CD4-positive, alpha-beta memory T cell (primary cell): ENCODE measurements at regions of chr14 and their contacts with region 1.

Region 1: DNA sequence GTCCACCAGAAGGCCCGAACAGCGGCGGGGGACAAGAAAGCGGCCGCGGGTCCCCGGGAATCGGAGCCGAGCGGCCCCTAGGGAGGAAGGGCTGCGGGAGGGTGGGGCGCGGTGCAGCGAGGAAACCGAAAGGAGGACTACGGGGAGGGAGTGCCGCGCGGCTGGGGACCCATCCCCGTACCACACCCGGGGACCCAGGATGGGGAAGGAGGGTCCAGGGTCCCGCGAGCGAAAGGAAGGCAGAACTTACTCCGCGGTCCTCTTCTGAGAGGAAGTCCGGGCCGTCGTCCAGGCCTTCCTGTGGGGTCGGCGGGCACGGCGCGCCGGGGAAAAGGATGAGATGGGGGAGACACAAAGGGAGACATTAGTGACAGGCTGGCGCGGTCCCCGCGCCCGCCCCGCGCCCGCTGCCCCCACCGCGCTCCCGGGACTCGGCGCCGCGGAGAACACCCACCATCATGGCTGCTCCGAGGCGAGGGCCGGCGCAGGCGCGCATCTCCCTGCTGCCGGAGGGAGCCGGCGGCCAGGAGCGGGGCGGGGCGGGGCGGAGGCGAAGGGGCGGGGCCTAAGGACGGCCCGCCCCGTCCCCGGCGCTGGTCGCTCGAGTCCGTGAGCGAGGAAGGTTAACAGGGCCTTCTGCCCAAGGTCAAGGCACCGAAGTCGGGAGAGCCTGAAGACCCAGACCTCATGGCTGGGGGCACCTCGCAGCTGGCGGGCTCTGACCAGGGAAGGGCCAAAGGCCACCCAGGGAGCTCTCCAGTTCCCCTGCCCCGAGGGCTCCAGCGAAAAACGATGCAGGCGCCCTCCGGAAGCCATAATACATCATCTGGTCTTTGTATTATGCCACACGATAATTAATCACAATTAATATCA is at the start of gene SNX6:
- DNase-seq: peak; percentile 83 to 86 (median 84)
- H3K4me3 ChIP-seq: peak within 1 kb of the TSS; percentile 83 to 88
- H3K4me3 Mint-ChIP-seq: peak within 1 kb of the TSS; percentile 87 to 99 (median 96)
- H3K27ac ChIP-seq: peak within 1 kb of the TSS; percentile 97
- H3K27ac Mint-ChIP-seq: peak within 1 kb of the TSS; percentile 91 to 98 (median 95)
- H3K4me1 ChIP-seq: peaks cover 46% of the 10 kb centered on the region
- H3K4me1 Mint-ChIP-seq: peaks cover 13 to 42% (median 29%) of the 10 kb centered on the region in 4 donors
- H3K27me3 ChIP-seq: no peaks in the 10 kb centered on the region
- H3K27me3 Mint-ChIP-seq: peaks cover 0 to 2% of the 10 kb centered on the region in 2 donors
- total RNA-seq, gene SNX6: 81.0 to 82.6 TPM

Region 2: DNA sequence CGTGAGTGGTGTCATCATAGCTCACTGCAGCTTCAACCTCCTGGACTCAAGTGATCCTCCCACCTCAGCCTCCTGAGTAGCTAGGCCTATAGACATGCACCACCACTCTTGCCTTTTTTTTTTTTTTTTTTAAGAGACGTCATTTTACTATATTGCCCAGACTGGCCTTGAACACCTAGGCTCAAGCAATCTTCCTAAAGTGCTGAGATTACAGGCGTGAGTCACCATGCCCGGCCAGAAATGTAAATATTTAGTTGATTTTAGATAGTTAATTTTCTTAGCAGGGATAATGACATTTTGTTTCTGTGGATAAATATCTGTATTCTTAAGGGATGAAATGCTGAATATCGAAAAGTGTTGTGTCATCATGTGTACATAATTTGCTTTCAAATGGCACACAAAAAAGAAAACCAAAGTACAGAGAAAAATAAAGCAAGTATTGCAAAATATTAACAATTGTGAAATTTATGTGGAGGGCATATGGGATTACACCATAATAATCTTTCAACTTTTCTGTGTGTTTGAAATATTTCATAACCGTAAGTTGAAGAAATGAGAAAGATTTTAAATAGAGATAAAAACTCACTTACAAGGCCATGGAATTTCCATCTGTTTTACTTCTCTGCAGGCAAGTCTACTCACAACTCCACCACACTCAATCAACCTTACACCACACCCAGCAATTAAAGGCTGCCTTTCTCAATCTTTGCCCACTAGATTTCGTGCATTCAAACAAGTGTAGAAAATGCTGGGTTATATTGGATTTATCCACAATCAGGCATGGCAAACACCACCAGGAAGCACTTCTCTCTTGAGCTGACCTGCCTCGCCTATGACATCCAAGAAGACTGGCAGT is 261.6 kb before region 1 on chr14:
- CTCF ChIA-PET with region 1: no interaction called
- POLR2A ChIA-PET with region 1: no interaction called
- intact Hi-C with region 1: no loop called
- DNase-seq: no peak
- H3K4me3 ChIP-seq: no peak overlapping the region
- H3K4me3 Mint-ChIP-seq: no peak overlapping the region
- H3K27ac ChIP-seq: no peak overlapping the region
- H3K27ac Mint-ChIP-seq: no peak overlapping the region
- H3K4me1 ChIP-seq: no peaks in the 10 kb centered on the region
- H3K4me1 Mint-ChIP-seq: no peaks in the 10 kb centered on the region
- H3K27me3 ChIP-seq: no peaks in the 10 kb centered on the region
- H3K27me3 Mint-ChIP-seq: peaks cover 9 to 26% of the 10 kb centered on the region in 2 donors

Region 3: DNA sequence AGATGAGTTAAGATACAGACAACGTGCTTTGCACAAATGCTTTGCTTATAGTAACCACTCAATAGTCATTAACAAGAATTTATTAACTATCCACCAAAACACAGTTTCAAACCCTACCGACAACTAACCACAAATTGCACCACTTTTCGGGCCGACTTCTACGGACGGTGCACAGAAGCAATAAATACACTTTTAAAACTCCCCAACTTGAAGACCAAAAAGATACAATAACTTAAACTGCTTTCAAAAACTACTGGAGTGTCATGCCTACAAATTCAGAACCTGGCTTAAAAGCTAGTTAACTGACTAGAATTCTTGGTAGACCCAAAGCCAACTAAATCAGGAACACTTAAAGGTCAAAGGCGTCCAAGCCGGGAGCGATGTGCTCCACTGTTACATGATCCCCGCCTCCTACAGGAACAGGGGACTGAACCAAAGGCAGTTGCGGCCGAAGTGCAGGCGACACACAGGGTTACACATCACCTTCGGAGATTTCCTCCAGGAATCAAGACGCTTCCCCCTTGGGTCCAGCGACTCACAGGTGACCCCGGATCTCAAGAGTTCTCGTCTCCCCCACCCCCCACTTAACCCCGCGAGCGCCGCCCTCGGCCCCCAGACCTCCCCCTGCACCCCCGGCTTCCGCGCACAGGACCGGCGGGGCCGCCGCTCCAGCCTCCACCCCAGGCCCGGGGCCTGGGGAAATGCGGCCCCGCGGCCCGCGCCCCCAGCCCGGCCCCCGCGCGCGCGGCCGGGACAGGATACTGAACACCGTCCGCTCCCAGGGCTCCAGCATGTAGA is 168.4 kb before region 1 on chr14:
- CTCF ChIA-PET with region 1: no interaction called
- POLR2A ChIA-PET with region 1: no interaction called
- intact Hi-C with region 1: loop called (anchors 5 kb)
- DNase-seq: peak in 4 of 5 donors; percentile 8 to 44 (median 14)
- H3K4me3 ChIP-seq: peak overlapping the region; percentile 43 to 51
- H3K4me3 Mint-ChIP-seq: peak overlapping the region; percentile 90 to 95 (median 94)
- H3K27ac ChIP-seq: peak overlapping the region; percentile 59
- H3K27ac Mint-ChIP-seq: peak overlapping the region; percentile 73 to 98 (median 94)
- H3K4me1 ChIP-seq: peaks cover 20% of the 10 kb centered on the region
- H3K4me1 Mint-ChIP-seq: peaks cover 11 to 20% (median 16%) of the 10 kb centered on the region in 4 donors
- H3K27me3 ChIP-seq: no peaks in the 10 kb centered on the region
- H3K27me3 Mint-ChIP-seq: no peaks in the 10 kb centered on the region

Region 4: DNA sequence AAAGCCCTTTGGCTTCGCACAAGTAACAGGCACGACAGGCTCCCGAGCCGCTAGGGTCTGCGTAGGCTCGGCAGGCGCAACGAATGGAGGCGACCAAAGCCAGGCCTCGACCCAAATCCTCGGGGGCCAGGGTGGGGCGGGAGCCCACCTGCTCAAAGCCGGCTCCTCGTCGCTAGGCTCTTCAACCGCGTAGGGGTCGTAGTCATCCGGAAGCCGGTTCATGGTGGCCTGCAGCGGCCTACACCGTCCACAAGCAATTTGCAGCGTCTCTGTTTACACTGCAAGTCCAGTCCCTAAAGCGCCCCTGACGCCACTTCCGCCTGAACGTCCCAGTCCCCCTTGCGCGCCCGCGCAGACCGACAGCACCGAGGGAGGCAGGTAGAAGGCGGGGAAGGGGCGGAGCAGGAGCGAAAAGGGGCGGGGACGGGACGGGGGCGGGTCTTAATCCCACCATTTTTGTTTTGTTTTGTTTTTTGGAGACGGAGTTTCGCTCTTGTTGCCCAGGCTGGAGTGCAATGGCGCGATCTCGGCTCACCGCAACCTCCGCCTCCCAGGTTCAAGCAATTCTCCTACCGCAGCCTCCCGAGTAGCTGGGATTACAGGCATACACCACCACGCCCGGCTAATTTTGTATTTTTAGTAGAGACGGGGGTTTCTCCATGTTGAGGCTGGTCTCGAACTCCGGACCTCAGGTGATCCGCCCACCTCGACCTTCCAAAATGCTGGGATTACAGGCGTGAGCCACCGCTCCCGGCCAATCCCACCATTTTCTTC is 90.3 kb before region 1 on chr14 and contains the start of gene EAPP:
- CTCF ChIA-PET with region 1: no interaction called
- POLR2A ChIA-PET with region 1: interaction called, 4 read pairs
- intact Hi-C with region 1: loop called (anchors 10 kb)
- DNase-seq: peak; percentile 91 to 97 (median 93)
- H3K4me3 ChIP-seq: peak within 1 kb of the TSS; percentile 66 to 94
- H3K4me3 Mint-ChIP-seq: peak within 1 kb of the TSS; percentile 97 to 100 (median 99)
- H3K27ac ChIP-seq: peak within 1 kb of the TSS; percentile 100
- H3K27ac Mint-ChIP-seq: peak within 1 kb of the TSS; percentile 97 to 100 (median 99)
- H3K4me1 ChIP-seq: peaks cover 31% of the 10 kb centered on the region
- H3K4me1 Mint-ChIP-seq: peaks cover 19 to 45% (median 31%) of the 10 kb centered on the region in 4 donors
- H3K27me3 ChIP-seq: no peaks in the 10 kb centered on the region
- H3K27me3 Mint-ChIP-seq: no peaks in the 10 kb centered on the region
- total RNA-seq, gene EAPP: 58.2 to 66.4 TPM

Region 5: GRCh38 chr14:34568803-34569202 is 61.1 kb before region 1 on chr14:
- CTCF ChIA-PET with region 1: no interaction called
- POLR2A ChIA-PET with region 1: no interaction called
- intact Hi-C with region 1: loop called (anchors 10 kb)
- DNase-seq: no peak
- H3K4me3 ChIP-seq: no peak overlapping the region
- H3K4me3 Mint-ChIP-seq: no peak overlapping the region
- H3K27ac ChIP-seq: no peak overlapping the region
- H3K27ac Mint-ChIP-seq: no peak overlapping the region
- H3K4me1 ChIP-seq: no peaks in the 10 kb centered on the region
- H3K4me1 Mint-ChIP-seq: no peaks in the 10 kb centered on the region
- H3K27me3 ChIP-seq: no peaks in the 10 kb centered on the region
- H3K27me3 Mint-ChIP-seq: no peaks in the 10 kb centered on the region

Region 6: DNA sequence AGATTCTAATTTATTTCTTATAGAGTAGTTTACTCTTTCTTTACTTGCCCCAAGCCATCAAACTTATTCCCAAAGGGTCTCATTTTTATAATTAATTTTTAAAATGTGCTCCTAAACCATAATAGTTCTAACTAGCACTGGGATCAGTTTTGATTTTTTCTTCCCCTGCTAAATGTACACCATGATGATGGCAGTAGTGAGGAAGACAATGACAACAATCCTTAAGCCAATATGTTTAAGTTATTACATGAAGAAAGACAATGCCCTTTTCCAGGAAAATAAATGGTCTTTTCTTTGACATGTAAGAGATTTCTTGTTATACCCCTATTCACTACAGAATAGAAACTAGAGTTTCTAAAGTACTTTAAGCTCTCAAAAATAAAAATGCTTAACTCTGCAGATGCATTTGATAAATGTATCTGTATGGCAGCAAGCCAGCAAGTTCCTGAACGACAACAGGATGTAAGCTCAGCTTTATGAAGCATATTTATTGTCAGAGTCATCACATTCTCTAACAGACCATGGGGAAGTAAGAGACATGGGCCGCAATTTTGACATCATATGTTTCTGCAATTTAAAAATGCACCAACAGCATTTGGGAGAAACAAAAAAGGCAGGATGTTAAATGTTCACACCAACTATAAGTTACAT is 36.0 kb after region 1 on chr14:
- CTCF ChIA-PET with region 1: no interaction called
- POLR2A ChIA-PET with region 1: interaction called, 11 read pairs
- intact Hi-C with region 1: loop called (anchors 5 kb)
- DNase-seq: peak in 4 of 5 donors; percentile 35 to 61 (median 51)
- H3K4me3 ChIP-seq: peak overlapping the region in 1 of 2 donors; percentile 12
- H3K4me3 Mint-ChIP-seq: peak overlapping the region in 7 of 8 donors; percentile 3 to 89 (median 73)
- H3K27ac ChIP-seq: peak overlapping the region; percentile 7
- H3K27ac Mint-ChIP-seq: peak overlapping the region; percentile 59 to 95 (median 92)
- H3K4me1 ChIP-seq: peaks cover 21% of the 10 kb centered on the region
- H3K4me1 Mint-ChIP-seq: peaks cover 8 to 17% (median 12%) of the 10 kb centered on the region in 4 donors
- H3K27me3 ChIP-seq: no peaks in the 10 kb centered on the region
- H3K27me3 Mint-ChIP-seq: no peaks in the 10 kb centered on the region

Region 7: GRCh38 chr14:34714320-34715126 is 84.6 kb after region 1 on chr14 and contains the start of gene CFL2:
- CTCF ChIA-PET with region 1: no interaction called
- POLR2A ChIA-PET with region 1: interaction called, 10 read pairs
- intact Hi-C with region 1: loop called (anchors 2 kb)
- DNase-seq: peak; percentile 66 to 90 (median 74)
- H3K4me3 ChIP-seq: peak within 1 kb of the TSS; percentile 25 to 65
- H3K4me3 Mint-ChIP-seq: peak within 1 kb of the TSS; percentile 88 to 95 (median 93)
- H3K27ac ChIP-seq: peak within 1 kb of the TSS; percentile 83
- H3K27ac Mint-ChIP-seq: peak within 1 kb of the TSS; percentile 92 to 96 (median 94)
- H3K4me1 ChIP-seq: peaks cover 28% of the 10 kb centered on the region
- H3K4me1 Mint-ChIP-seq: peaks cover 15 to 27% (median 19%) of the 10 kb centered on the region in 4 donors
- H3K27me3 ChIP-seq: no peaks in the 10 kb centered on the region
- H3K27me3 Mint-ChIP-seq: no peaks in the 10 kb centered on the region
- total RNA-seq, gene CFL2: 12.3 to 12.6 TPM

Region 8: GRCh38 chr14:34741840-34742239 is 111.9 kb after region 1 on chr14:
- CTCF ChIA-PET with region 1: no interaction called
- POLR2A ChIA-PET with region 1: no interaction called
- intact Hi-C with region 1: no loop called
- DNase-seq: peak in 4 of 5 donors; percentile 44 to 68 (median 52)
- H3K4me3 ChIP-seq: no peak overlapping the region
- H3K4me3 Mint-ChIP-seq: peak overlapping the region in 7 of 8 donors; percentile 23 to 72 (median 55)
- H3K27ac ChIP-seq: no peak overlapping the region
- H3K27ac Mint-ChIP-seq: peak overlapping the region; percentile 40 to 97 (median 89)
- H3K4me1 ChIP-seq: peaks cover 25% of the 10 kb centered on the region
- H3K4me1 Mint-ChIP-seq: peaks cover 34 to 53% (median 45%) of the 10 kb centered on the region in 4 donors
- H3K27me3 ChIP-seq: no peaks in the 10 kb centered on the region
- H3K27me3 Mint-ChIP-seq: peaks cover 0 to 1% of the 10 kb centered on the region in 2 donors

Region 9: DNA sequence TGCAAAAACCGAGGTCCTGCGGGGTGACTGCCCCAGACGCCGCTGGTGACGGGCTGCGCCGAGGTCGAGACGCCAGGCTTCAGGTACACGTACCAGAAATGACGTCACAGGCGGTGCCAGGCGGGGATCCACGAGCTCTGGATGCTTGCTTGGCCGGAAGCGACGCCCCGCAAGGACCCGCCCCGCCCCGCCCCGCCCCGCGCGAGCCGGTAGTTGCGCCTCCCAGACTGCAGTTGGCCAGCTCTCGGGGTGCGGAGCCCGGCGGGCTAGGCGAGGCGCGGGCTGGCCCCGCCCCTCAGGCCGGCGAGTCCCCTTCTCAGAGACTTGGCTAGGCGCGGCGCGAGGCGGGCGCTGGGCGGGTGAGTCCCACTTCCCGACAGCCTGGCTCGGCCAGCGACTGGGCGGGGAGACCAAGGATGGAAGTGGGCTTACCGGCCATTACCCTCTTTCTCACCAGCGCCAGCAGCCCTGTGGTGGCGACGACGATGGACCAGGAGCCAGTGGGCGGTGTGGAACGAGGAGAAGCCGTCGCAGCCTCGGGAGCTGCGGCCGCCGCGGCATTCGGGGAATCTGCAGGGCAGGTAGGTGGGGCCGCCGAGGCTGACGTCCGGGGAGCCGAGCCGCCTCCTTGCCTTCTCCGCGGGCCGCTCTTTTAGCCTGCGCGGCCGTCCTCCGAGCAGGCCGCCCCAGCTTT is 416.3 kb after region 1 on chr14 and contains the start of gene FAM177A1:
- CTCF ChIA-PET with region 1: no interaction called
- POLR2A ChIA-PET with region 1: interaction called, 6 read pairs
- intact Hi-C with region 1: loop called (anchors 2 kb)
- DNase-seq: peak; percentile 98 to 100 (median 99)
- H3K4me3 ChIP-seq: peak within 1 kb of the TSS; percentile 76 to 92
- H3K4me3 Mint-ChIP-seq: peak within 1 kb of the TSS; percentile 87 to 100 (median 96)
- H3K27ac ChIP-seq: peak within 1 kb of the TSS; percentile 98
- H3K27ac Mint-ChIP-seq: peak within 1 kb of the TSS; percentile 95 to 100 (median 99)
- H3K4me1 ChIP-seq: peaks cover 24% of the 10 kb centered on the region
- H3K4me1 Mint-ChIP-seq: peaks cover 19 to 38% (median 30%) of the 10 kb centered on the region in 4 donors
- H3K27me3 ChIP-seq: no peaks in the 10 kb centered on the region
- H3K27me3 Mint-ChIP-seq: no peaks in the 10 kb centered on the region
- total RNA-seq, gene FAM177A1: 35.2 to 41.5 TPM